Heart left ventricle (tissue), 16 donors: ENCODE measurements at regions of chr2 and their contacts with region 1.

Region 1: DNA sequence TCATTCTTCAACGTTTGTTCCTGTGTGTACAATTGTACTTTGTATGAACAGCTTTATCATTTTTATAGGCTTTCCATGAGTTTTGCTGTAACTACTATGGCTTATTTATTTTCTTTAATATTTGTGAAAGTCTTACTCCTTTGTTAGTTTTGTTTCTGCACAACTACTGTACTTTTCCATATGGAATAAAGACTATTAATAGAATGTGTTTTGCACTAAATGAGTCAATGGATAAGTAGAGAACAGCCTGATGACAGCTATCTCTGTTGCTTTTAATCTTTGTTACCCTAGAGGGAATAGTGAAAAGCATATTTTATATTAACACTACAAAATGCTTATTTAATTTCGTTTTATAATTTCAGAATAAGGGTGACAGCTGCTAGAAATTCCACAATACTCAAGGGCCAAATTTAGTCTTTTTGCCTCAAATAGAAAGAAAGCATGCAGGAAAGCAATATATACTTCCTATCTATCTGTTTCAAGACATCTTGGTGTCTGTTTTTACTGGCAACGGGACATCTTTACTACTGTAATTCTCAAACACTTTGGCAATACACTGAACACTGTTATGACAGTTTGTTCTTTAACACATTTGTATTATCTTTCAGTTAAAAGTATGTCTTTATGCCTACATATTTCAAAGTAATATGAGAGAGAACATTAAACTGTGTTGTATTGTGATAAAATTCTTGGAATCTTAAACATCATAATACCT is 53.9 kb downstream of the WDSUB1 start:
- DNase-seq: no peak
- ATAC-seq: peak in 2 of 4 donors; percentile 37 to 50
- H3K4me3 ChIP-seq: no peak overlapping the region
- H3K27ac ChIP-seq: peak overlapping the region in 8 of 12 donors; percentile 2 to 51 (median 12)
- H3K4me1 ChIP-seq: peaks cover 0 to 35% (median 14%) of the 10 kb centered on the region in 12 donors
- H3K27me3 ChIP-seq: no peaks in the 10 kb centered on the region
- CTCF ChIP-seq: no peak
- POLR2A ChIP-seq: no peak

Region 2: GRCh38 chr2:159243529-159243928 is 10.9 kb after region 1 on chr2:
- intact Hi-C with region 1: loop called in 1 of 10 experiments (anchors 1 kb)
- DNase-seq: no peak
- ATAC-seq: no peak
- H3K4me3 ChIP-seq: no peak overlapping the region
- H3K27ac ChIP-seq: no peak overlapping the region
- H3K4me1 ChIP-seq: peaks cover 0 to 7% (median 0%) of the 10 kb centered on the region in 12 donors
- H3K27me3 ChIP-seq: no peaks in the 10 kb centered on the region
- CTCF ChIP-seq: no peak
- POLR2A ChIP-seq: no peak

Region 3: DNA sequence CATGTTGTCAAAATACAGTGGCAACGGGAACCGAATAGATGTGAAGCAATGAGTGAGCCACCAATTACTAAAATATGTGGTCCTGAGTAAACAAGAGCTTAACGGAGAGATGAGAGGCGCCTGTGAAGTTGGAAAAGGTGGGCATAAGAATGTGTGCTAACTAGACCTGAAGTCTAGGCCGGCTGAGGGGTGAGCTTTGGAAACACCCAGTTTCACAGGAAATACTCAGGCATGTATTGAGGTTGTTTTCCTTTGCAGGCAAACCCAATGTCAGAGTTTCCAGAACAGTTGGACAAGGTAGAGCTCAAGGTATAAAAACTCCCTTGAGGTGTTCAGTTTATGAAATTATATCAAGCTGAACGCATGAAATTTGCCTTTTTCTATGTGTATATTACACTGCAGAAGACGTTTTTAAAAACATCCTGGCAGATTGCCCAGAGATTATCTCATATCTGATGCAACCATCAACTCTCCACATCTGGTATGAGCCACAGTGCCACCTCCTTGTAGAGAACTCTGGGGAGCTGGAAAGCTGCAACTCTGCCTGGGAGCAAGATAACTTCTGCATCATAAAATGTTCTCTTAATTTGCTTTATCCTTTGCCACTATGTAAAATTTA is 57.8 kb after region 1 on chr2:
- intact Hi-C with region 1: no loop called
- DNase-seq: no peak
- ATAC-seq: no peak
- H3K4me3 ChIP-seq: no peak overlapping the region
- H3K27ac ChIP-seq: no peak overlapping the region
- H3K4me1 ChIP-seq: peaks cover 0 to 23% (median 7%) of the 10 kb centered on the region in 12 donors
- H3K27me3 ChIP-seq: no peaks in the 10 kb centered on the region
- CTCF ChIP-seq: no peak
- POLR2A ChIP-seq: no peak

Region 4: GRCh38 chr2:159661286-159661685 is 428.7 kb after region 1 on chr2:
- intact Hi-C with region 1: no loop called
- DNase-seq: no peak
- ATAC-seq: no peak
- H3K4me3 ChIP-seq: no peak overlapping the region
- H3K27ac ChIP-seq: no peak overlapping the region
- H3K4me1 ChIP-seq: peaks cover 0 to 8% (median 0%) of the 10 kb centered on the region in 12 donors
- H3K27me3 ChIP-seq: no peaks in the 10 kb centered on the region
- CTCF ChIP-seq: no peak
- POLR2A ChIP-seq: no peak